K562 (cell line): ENCODE measurements at regions of chr22 and their contacts with region 1.

Region 1: DNA sequence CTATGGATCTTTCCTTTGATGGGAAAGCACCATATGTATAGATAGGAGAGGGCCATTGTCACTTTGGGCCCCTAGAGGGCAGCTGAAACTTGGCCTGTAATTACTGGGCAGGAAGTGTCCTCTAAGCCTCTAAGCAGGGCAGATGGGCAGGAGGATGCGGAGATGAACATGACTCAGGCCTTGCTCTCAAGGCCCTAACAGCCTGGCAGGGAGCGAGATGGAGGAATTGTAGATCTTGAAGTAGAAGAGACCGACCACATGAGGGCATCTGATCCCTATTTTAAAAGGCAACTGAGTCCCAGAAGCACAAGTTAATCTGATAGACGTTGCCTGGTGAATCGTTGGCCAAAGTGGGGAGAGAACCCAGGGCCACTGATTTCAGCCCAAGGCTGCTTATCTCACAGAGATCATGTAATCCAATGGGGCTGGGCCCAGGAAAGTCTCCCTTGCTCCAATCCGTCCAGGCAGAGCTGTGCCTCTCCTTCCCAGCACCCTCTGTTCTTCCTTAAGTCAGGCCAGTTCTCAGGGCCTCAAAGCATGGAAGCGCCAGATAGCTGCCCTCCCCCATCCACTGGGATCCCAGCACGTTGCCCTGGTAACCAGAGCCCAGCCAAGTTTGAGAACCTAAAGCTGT is 2.5 kb upstream of the SEPTIN3 start:
- DNase-seq: peak; percentile 21 to 51 (median 31)
- ATAC-seq: peak; percentile 68
- H3K4me3 ChIP-seq: no peak overlapping the region
- H3K27ac ChIP-seq: no peak overlapping the region
- H3K4me1 ChIP-seq: peaks cover 4 to 11% of the 10 kb centered on the region in 2 experiments; a peak in 4 of 5 replicates
- H3K27me3 ChIP-seq: peaks cover 0 to 11% of the 10 kb centered on the region in 2 experiments; a peak in 1 of 5 replicates
- CTCF ChIP-seq: peak; percentile 35 to 44 (median 39); a peak in 5 of 6 replicates
- EP300 ChIP-seq: no peak
- POLR2A ChIP-seq: no peak
- RAD21 ChIP-seq: peak in 1 of 2 experiments; percentile 49; a peak in 2 of 4 replicates

Region 2: GRCh38 chr22:41915035-41915785 is 51.5 kb before region 1 on chr22 and contains the start of gene SHISA8:
- CTCF ChIA-PET with region 1: no interaction called
- POLR2A ChIA-PET with region 1: no interaction called
- in situ Hi-C with region 1: no loop called
- intact Hi-C with region 1: no loop called
- DNase-seq: peak in 2 of 4 experiments; percentile 61 to 72
- ATAC-seq: peak; percentile 84
- H3K4me3 ChIP-seq: peak within 1 kb of the TSS; percentile 41
- H3K27ac ChIP-seq: no peak within 1 kb of the TSS
- H3K4me1 ChIP-seq: peaks cover 6 to 53% of the 10 kb centered on the region in 2 experiments; a peak in 3 of 5 replicates
- H3K27me3 ChIP-seq: 0 out of 5 replicates have a peak, but pooled peaks cover 0 to 4% of the 10 kb centered on the region in 2 experiments
- CTCF ChIP-seq: no peak
- EP300 ChIP-seq: no peak
- POLR2A ChIP-seq: no peak
- RAD21 ChIP-seq: no peak
- polyA plus RNA-seq, gene SHISA8: 0.07 TPM in 1 of 2 experiments, not detected in the other

Region 3: GRCh38 chr22:42114721-42115120 is 148.0 kb after region 1 on chr22:
- CTCF ChIA-PET with region 1: no interaction called
- POLR2A ChIA-PET with region 1: no interaction called
- in situ Hi-C with region 1: no loop called
- intact Hi-C with region 1: loop called (anchors 10 kb)
- DNase-seq: peak in 1 of 4 experiments; percentile 21
- ATAC-seq: no peak
- H3K4me3 ChIP-seq: no peak overlapping the region
- H3K27ac ChIP-seq: no peak overlapping the region
- H3K4me1 ChIP-seq: peaks cover 0 to 4% of the 10 kb centered on the region in 2 experiments; a peak in 2 of 5 replicates
- H3K27me3 ChIP-seq: no peaks in the 10 kb centered on the region
- CTCF ChIP-seq: peak; percentile 16 to 35 (median 32); a peak in 4 of 6 replicates
- EP300 ChIP-seq: no peak
- POLR2A ChIP-seq: no peak
- RAD21 ChIP-seq: no peak